ENCODE measurements at regions of chr3 and their contacts with region 1.

Region 1: GRCh38 chr3:136075218-136075808 is 109.8 kb downstream of the PPP2R3A start:
- DNase-seq: peak; percentile 71 to 80 (median 78)
- ATAC-seq: peak; percentile 84
- H3K4me3 ChIP-seq: no peak overlapping the region
- H3K27ac ChIP-seq: no peak overlapping the region
- H3K4me1 ChIP-seq: no peaks in the 10 kb centered on the region
- H3K27me3 ChIP-seq: no peaks in the 10 kb centered on the region
- CTCF ChIP-seq: peak; percentile 72 to 97 (median 97)
- POLR2A ChIP-seq: no peak

Region 2: GRCh38 chr3:135784557-135784956 is 290.8 kb before region 1 on chr3:
- intact Hi-C with region 1: no loop called
- DNase-seq: no peak
- ATAC-seq: no peak
- H3K4me3 ChIP-seq: no peak overlapping the region
- H3K27ac ChIP-seq: no peak overlapping the region
- H3K4me1 ChIP-seq: no peaks in the 10 kb centered on the region
- H3K27me3 ChIP-seq: no peaks in the 10 kb centered on the region
- CTCF ChIP-seq: no peak
- POLR2A ChIP-seq: no peak

Region 3: GRCh38 chr3:136249593-136250225 is 174.4 kb after region 1 on chr3:
- intact Hi-C with region 1: loop called (anchors 10 kb)
- DNase-seq: peak in 1 of 4 donors; percentile 20
- ATAC-seq: no peak
- H3K4me3 ChIP-seq: peak overlapping the region; percentile 21 to 30
- H3K27ac ChIP-seq: peak overlapping the region; percentile 77 to 97 (median 86)
- H3K4me1 ChIP-seq: peaks cover 21% of the 10 kb centered on the region
- H3K27me3 ChIP-seq: no peaks in the 10 kb centered on the region
- CTCF ChIP-seq: no peak
- POLR2A ChIP-seq: no peak